H1 (cell line): ENCODE measurements at regions of chr7 and their contacts with region 1.

Region 1: DNA sequence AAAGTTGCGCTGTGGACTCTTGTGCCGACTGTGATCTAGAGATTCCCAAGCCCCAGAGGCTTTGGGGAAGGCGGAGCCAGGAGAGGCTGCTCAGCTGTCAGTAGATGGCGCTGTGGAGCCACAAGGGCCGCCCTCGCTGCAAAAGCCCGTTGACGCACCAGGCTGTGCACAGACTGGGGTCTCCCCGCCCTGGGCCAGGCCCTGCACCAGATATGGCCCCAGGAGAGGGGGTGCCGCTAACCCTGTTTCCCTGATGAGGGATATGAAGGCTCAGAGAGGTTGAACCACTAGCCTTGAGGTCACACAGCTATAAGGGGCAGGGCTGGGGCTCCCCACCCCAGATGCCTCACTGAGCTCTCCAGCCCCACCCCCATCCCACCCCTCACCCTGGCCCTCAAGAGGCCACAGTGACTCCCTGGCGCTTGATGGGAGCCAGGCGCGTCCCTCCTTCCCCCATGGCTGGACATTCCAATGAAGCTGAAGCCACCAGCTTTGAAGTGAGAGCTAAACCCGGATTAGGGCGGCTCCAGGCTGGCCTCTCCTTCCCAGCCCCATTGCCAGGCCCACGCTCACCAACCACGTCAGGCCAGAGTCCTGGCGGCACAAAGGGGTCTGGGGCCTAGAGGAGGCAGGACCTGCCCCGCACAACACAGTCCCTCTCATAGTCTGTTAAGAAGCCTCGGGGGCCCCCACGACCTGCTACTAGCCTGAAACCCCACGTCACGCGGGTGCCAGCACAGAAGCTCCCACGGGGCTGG is 26.4 kb downstream of the MYL10 start:
- DNase-seq: peak; percentile 77 to 97
- H3K4me3 ChIP-seq: no peak overlapping the region
- H3K27ac ChIP-seq: no peak overlapping the region
- H3K4me1 ChIP-seq: peaks cover 0 to 6% (median 6%) of the 10 kb centered on the region in 4 experiments; a peak in 5 of 7 replicates
- H3K27me3 ChIP-seq: no peaks in the 10 kb centered on the region
- CTCF ChIP-seq: peak; percentile 89 to 97 (median 91)
- EP300 ChIP-seq: peak in 1 of 2 experiments; percentile 23; a peak in 1 of 3 replicates
- POLR2A ChIP-seq: no peak
- RAD21 ChIP-seq: peak; percentile 97

Region 2: DNA sequence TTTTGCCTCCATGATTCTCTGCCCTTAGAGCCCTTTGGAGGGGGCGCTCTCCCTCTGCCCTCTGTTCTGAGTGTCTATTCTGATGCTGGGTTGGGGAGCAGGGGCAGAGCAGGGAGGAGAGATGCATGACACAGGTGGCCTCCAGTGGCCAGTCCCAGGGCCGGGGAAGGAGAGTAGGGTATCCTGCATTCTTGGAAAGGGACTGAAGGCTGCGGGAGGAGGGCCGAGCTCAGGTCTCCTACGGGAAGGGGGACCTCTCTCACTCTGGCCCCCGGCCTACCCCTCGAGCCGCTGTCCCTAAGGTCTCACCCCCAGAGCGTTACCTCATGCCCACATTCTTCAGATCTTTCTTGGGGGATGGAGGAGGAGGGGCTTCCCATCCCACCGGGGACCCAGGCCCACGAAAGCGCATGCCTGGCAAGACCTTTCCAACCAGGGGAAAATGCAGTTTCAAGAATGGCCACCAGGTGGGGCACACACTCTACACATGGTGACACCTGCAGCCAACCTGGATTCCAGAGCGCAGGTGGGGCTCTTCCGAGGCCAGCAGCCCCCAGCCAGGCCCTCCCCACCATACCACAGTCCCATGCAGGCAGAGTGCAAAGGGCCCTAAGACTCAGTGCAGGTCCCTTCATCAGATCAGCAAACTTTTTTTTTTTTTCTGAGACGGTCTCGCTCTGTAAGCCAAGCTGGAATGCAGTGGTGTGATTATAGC is 60.0 kb before region 1 on chr7:
- CTCF ChIA-PET with region 1: interaction called, 26 read pairs
- POLR2A ChIA-PET with region 1: no interaction called
- DNase-seq: peak; percentile 56 to 99
- H3K4me3 ChIP-seq: no peak overlapping the region
- H3K27ac ChIP-seq: no peak overlapping the region
- H3K4me1 ChIP-seq: peaks cover 0 to 2% (median under 1%) of the 10 kb centered on the region in 4 experiments; a peak in 2 of 7 replicates
- H3K27me3 ChIP-seq: no peaks in the 10 kb centered on the region
- CTCF ChIP-seq: peak; percentile 85 to 98 (median 87)
- EP300 ChIP-seq: no peak
- POLR2A ChIP-seq: no peak
- RAD21 ChIP-seq: peak; percentile 94 to 96

Region 3: DNA sequence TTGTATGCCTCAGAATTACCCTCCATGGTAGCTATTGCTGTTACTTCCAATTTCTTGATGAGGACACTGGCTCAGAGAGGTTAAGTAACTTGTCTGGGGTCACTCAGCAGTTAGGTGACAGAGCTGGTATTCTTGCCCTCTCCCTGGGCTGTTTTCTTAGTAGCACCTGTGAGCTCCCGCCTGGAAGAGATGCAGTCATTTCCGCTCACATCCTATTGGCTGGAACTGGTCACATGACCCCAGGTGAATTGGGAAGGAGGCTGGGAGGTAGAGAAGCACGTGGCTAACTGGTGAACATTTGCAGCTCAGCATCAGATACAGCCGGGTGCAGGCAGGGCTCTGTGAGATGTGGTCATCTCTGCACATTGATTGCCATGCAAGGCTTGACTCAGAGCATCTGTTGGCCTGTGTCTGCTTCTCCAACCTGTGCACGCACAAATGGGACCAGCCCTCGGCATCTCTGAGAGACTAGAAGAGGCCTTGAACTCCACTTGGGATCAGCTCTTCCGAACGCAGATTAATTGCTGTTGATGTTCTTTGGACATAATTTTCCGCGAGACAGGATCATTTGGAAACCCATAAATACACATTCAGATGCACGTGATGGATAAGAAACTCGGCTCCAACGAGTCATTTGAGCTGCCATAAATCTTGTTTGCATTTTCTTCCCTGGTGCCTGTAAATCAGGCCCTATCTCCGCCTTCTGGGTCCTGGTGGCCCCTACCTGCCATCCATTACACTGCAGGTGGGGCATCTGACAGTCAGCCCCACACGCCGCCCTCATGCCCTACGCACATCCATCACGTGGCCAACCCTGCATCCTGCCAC is 16.4 kb before region 1 on chr7:
- CTCF ChIA-PET with region 1: interaction called, 23 read pairs
- POLR2A ChIA-PET with region 1: interaction called, 4 read pairs
- DNase-seq: peak in 1 of 2 experiments; percentile 60
- H3K4me3 ChIP-seq: no peak overlapping the region
- H3K27ac ChIP-seq: no peak overlapping the region
- H3K4me1 ChIP-seq: no peaks in the 10 kb centered on the region
- H3K27me3 ChIP-seq: no peaks in the 10 kb centered on the region; a peak in 1 of 7 replicates
- CTCF ChIP-seq: no peak
- EP300 ChIP-seq: no peak
- POLR2A ChIP-seq: no peak
- RAD21 ChIP-seq: 0 out of 4 replicates have a peak, but pooled peaks of 1 of the 2 experiments have one; percentile 14

Region 4: DNA sequence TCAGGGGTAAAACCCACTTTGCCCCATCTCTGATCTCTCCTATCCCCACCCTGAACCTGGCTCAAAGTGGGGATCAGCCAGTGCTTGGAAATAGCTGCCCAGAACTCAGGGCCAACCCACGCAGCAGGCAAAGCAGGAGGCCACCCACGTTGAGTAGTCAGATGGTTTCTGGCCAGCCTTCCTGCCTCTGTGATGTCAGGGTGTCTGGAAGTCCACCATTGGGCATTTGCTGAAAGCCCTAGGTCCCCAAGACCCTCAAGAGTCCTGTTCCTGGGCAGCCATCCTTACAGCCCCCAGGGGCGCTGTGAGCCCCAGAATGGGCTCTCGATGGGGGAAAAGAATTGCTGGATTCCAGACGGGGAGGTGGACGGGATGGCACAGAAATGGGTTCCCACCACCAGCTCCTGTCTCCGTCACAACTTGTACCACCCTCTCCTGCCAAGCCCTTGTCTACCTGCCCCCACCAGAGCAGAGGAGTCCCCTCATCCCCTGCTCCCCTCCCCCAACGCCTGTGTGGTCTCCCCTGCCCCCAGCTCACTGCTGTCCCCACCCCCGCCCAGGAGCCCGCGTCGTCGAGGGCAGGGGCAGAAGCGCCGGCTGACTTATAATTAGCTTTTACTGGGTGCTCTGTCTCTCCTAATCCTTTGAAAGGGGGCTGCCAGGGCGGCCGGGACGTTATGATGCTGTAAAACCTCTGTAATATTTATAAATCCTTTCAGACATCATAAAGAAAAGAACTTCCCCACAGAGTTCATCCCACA is 22.5 kb after region 1 on chr7:
- CTCF ChIA-PET with region 1: interaction called, 21 read pairs
- POLR2A ChIA-PET with region 1: interaction called, 5 read pairs
- DNase-seq: no peak
- H3K4me3 ChIP-seq: no peak overlapping the region
- H3K27ac ChIP-seq: no peak overlapping the region
- H3K4me1 ChIP-seq: peaks cover 0 to 26% (median 17%) of the 10 kb centered on the region in 4 experiments; a peak in 6 of 7 replicates
- H3K27me3 ChIP-seq: no peaks in the 10 kb centered on the region
- CTCF ChIP-seq: peak in 2 of 3 experiments; percentile 26 to 54; a peak in 2 of 4 replicates
- EP300 ChIP-seq: no peak
- POLR2A ChIP-seq: no peak
- RAD21 ChIP-seq: peak; percentile 37 to 53; a peak in 3 of 4 replicates

Region 5: GRCh38 chr7:101688183-101688831 is 85.6 kb after region 1 on chr7:
- CTCF ChIA-PET with region 1: interaction called, 14 read pairs
- POLR2A ChIA-PET with region 1: interaction called, 3 read pairs
- DNase-seq: peak in 1 of 2 experiments; percentile 98
- H3K4me3 ChIP-seq: peak overlapping the region in 1 of 4 experiments; percentile 43; a peak in 2 of 8 replicates
- H3K27ac ChIP-seq: no peak overlapping the region
- H3K4me1 ChIP-seq: no peaks in the 10 kb centered on the region; a peak in 2 of 7 replicates
- H3K27me3 ChIP-seq: peaks cover 0 to 2% (median 0%) of the 10 kb centered on the region in 4 experiments; a peak in 1 of 7 replicates
- CTCF ChIP-seq: peak; percentile 84 to 91 (median 86)
- EP300 ChIP-seq: no peak
- POLR2A ChIP-seq: no peak
- RAD21 ChIP-seq: peak; percentile 91 to 93